Esophagus muscularis mucosa (tissue), 4 donors: ENCODE measurements at regions of chr7 and their contacts with region 1.

Region 1: GRCh38 chr7:73522105-73522872 is at the start of gene BAZ1B:
- DNase-seq: peak; percentile 99
- H3K4me3 ChIP-seq: peak within 1 kb of the TSS; percentile 71 to 95 (median 90)
- H3K27ac ChIP-seq: peak within 1 kb of the TSS; percentile 88 to 96 (median 94)
- H3K4me1 ChIP-seq: peaks cover 29 to 47% (median 46%) of the 10 kb centered on the region in 4 donors
- H3K27me3 ChIP-seq: no peaks in the 10 kb centered on the region
- CTCF ChIP-seq: peak in 1 of 3 experiments; percentile 10
- EP300 ChIP-seq: no peak
- POLR2A ChIP-seq: no peak
- total RNA-seq, gene BAZ1B: 55.3 to 72.2 (median 66.2) TPM

Region 2: GRCh38 chr7:72924733-72925545 is 597.4 kb before region 1 on chr7 and contains the start of gene POM121:
- intact Hi-C with region 1: no loop called
- DNase-seq: peak; percentile 95
- H3K4me3 ChIP-seq: peak within 1 kb of the TSS; percentile 78 to 90 (median 86)
- H3K27ac ChIP-seq: peak within 1 kb of the TSS; percentile 91 to 96 (median 94)
- H3K4me1 ChIP-seq: peaks cover 19 to 35% (median 30%) of the 10 kb centered on the region in 4 donors
- H3K27me3 ChIP-seq: no peaks in the 10 kb centered on the region
- CTCF ChIP-seq: peak in 1 of 3 experiments; percentile 11
- EP300 ChIP-seq: no peak
- POLR2A ChIP-seq: peak; percentile 6
- total RNA-seq, gene POM121: 15.6 to 26.2 (median 17.2) TPM

Region 3: DNA sequence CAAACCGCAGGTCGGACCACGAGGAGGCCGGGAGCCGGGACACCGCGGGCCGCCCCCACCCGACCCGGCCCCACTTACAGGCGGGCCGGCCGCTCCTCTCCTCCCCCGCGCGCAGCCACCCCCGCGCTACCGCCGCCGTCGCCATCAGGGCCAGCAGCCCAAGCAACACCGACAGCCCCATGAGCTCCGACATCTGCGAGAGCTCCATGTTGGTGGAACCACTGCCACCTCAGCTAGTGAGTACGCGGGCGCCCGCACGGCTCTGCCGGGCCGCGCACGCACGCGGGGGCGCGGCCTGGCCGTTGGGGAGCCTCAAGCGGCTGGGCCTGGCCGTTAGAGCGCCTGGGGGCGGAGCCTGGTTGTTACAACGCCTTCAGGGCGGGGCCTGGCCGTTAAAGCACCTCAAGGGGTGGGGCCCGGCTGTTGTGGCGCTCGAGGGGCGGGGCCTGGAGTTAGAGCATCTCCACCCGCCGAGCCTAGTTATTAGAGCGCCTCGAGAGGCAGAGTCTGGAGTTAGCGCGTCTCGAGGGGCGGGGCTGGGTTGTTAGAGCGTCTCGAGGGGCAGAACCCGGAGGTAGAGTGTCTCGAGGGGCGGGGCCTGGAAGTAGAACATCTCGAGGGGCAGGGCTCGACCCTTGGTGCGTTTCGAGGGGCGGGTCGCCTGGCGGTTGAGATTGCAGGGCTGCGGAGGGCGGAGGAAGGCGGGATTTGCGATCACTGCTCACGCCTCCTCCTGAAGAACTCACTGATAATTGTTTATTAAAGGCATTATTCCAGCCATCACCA is 56.2 kb after region 1 on chr7 and contains the start of gene TBL2:
- intact Hi-C with region 1: loop called (anchors 2 kb)
- DNase-seq: peak; percentile 99
- H3K4me3 ChIP-seq: peak within 1 kb of the TSS; percentile 85 to 96 (median 93)
- H3K27ac ChIP-seq: peak within 1 kb of the TSS; percentile 92 to 94 (median 92)
- H3K4me1 ChIP-seq: peaks cover 24 to 46% (median 34%) of the 10 kb centered on the region in 4 donors
- H3K27me3 ChIP-seq: no peaks in the 10 kb centered on the region
- CTCF ChIP-seq: peak in 2 of 3 experiments; percentile 9 to 24
- EP300 ChIP-seq: no peak
- POLR2A ChIP-seq: peak; percentile 75
- total RNA-seq, gene TBL2: 19.1 to 52.5 (median 38.2) TPM

Region 4: GRCh38 chr7:73593207-73594045 is 71.1 kb after region 1 on chr7:
- intact Hi-C with region 1: no loop called
- DNase-seq: no peak
- H3K4me3 ChIP-seq: no peak overlapping the region
- H3K27ac ChIP-seq: no peak overlapping the region
- H3K4me1 ChIP-seq: no peaks in the 10 kb centered on the region
- H3K27me3 ChIP-seq: peaks cover 0 to 33% (median 0%) of the 10 kb centered on the region in 4 donors
- CTCF ChIP-seq: no peak
- EP300 ChIP-seq: no peak
- POLR2A ChIP-seq: no peak